ENCODE measurements at regions of chr4 and their contacts with region 1.

Region 1: GRCh38 chr4:121675715-121676114 is 21.1 kb downstream of the ANXA5 start:
- DNase-seq: no peak
- H3K4me3 ChIP-seq: no peak overlapping the region
- H3K27ac ChIP-seq: no peak overlapping the region
- H3K4me1 ChIP-seq: no peaks in the 10 kb centered on the region
- H3K27me3 ChIP-seq: no peaks in the 10 kb centered on the region
- CTCF ChIP-seq: no peak

Region 2: GRCh38 chr4:121030131-121030530 is 645.6 kb before region 1 on chr4:
- CTCF ChIA-PET with region 1: no interaction called
- POLR2A ChIA-PET with region 1: no interaction called
- intact Hi-C with region 1: no loop called
- DNase-seq: no peak
- H3K4me3 ChIP-seq: no peak overlapping the region
- H3K27ac ChIP-seq: no peak overlapping the region
- H3K4me1 ChIP-seq: no peaks in the 10 kb centered on the region
- H3K27me3 ChIP-seq: no peaks in the 10 kb centered on the region
- CTCF ChIP-seq: no peak

Region 3: DNA sequence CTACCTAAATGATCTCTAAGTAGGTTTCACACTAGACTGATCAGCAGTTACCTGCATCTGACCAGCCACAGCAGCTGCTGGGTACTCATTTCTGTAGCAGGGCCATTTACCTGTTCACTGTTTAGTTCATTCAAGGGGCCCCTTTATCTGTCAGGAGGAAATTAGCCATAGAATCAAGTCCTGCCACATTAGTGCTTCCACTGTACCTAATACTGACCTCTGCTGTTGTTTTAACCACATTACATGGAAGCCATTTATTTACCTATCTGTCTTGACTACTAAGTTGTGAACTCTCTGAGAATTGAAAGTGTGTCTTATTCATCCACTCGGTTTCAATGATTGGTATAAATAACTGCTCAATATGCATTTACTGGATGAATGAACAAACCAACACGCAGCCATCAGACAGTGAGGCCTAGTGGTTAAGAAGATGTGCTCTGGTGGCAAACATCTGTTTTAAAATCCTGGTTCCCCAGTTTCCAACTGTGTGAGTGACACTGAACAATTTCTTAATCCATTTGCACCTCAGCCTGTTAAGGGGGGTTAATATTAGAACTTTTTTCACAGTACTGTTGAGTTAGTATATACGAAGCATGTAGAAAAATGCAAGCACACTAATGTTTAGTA is 51.0 kb after region 1 on chr4:
- CTCF ChIA-PET with region 1: no interaction called
- POLR2A ChIA-PET with region 1: no interaction called
- intact Hi-C with region 1: loop called (anchors 10 kb)
- DNase-seq: peak in 1 of 2 experiments; percentile 59
- H3K4me3 ChIP-seq: no peak overlapping the region
- H3K27ac ChIP-seq: no peak overlapping the region
- H3K4me1 ChIP-seq: peaks cover 16% of the 10 kb centered on the region
- H3K27me3 ChIP-seq: no peaks in the 10 kb centered on the region
- CTCF ChIP-seq: peak; percentile 80

Region 4: DNA sequence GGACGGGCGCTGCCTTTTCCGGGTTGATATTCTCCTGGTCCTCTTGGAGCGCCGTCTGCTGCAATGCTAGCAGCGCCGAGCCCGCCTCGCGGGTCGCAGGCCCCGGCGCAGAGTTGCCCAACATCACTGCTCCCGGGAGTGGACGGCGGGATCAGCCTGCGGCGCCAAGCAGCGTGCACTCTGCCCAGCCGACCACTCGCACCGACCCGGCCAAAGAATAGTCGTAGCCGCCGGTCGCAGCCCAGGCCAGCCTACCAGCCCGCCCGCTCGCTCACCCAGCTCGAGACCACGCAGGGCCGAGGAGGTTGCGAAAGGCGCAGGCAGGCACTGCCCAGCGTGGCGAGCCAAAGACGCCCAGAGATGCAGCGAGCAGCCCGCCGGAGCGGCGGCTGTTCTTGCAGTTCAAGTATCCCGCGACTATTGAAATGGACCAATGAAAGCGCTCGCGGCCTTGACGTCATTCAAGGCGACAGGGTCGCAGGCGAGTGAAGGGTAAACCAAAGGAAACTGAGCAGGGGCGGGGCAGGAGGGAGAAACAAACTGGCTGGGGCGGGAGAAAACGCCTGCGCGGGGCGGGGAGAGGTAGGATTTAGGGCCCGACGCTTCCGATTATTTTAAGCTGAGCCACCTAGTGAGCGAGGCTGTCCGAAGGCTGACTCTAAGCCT is 147.9 kb after region 1 on chr4 and contains the start of gene CCNA2:
- CTCF ChIA-PET with region 1: no interaction called
- POLR2A ChIA-PET with region 1: no interaction called
- intact Hi-C with region 1: no loop called
- DNase-seq: peak; percentile 92 to 93
- H3K4me3 ChIP-seq: peak within 1 kb of the TSS; percentile 85
- H3K27ac ChIP-seq: peak within 1 kb of the TSS; percentile 25; the same call in 1 of the 2 replicates
- H3K4me1 ChIP-seq: peaks cover 27% of the 10 kb centered on the region
- H3K27me3 ChIP-seq: no peaks in the 10 kb centered on the region
- CTCF ChIP-seq: no peak
- total RNA-seq, gene CCNA2: 61.9 and 70.7 TPM in 2 replicates

Region 5: DNA sequence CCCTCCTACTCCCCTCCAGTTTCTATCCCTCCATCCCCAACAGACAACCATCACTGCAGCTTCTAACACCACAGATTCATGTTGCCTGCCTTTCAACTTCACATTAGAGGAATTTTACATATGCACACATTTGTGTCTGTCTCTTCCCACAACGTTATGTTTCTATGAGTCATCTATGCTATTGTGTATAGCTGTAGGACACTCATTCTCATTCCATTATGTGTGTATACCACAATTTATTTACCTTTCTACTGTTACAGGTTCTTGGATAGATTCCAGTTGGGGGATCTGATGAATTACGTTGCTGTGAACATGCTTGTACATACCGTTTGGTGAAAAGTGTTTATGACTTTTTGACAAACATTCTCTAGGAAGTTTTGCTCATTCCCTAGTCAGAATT is 334.9 kb after region 1 on chr4:
- CTCF ChIA-PET with region 1: no interaction called
- POLR2A ChIA-PET with region 1: no interaction called
- intact Hi-C with region 1: no loop called
- DNase-seq: no peak
- H3K4me3 ChIP-seq: no peak overlapping the region
- H3K27ac ChIP-seq: no peak overlapping the region
- H3K4me1 ChIP-seq: no peaks in the 10 kb centered on the region
- H3K27me3 ChIP-seq: no peaks in the 10 kb centered on the region
- CTCF ChIP-seq: no peak

Measured in PC-9 (cell line).